ENCODE measurements at regions of chr21 and their contacts with region 1.

Region 1: DNA sequence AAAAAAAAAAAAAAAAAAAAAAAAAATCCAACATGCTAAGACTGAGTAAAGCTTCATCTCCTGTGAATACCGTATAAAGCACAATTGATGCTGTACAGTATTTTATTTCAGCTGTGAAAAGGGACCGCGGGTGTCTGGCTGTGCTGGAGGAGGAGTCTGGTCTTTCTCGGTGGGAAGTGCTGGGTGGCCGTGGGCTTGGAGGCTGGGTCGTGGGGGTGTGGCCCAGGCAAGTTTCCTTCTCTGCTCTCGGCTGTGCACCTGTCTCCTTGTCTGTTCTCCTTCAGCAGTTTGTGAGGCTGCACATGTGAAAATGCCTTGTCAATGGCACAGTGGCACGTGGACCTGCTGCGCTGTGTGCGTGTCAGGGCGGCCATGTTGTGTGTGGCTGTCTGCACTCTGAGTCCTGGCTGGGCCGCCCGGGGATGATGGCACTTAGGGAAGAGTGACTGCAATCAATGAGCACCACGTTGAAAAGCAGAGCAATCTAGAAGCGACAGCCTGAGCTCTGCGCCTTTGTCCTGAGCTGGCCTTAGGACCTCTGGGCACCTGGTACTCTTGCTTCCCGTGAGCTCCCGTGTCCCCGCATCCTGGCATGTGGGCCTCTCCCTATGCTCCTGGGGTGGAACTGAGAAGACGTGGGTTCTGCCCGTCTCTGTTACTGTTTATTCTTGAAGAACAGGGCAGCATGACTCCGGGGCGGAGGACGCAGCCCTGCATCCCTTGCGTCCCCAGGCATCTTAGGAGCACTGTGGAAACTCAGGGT is 14.5 kb downstream of the AGPAT3 start:
- DNase-seq: no peak
- H3K4me3 ChIP-seq: no peak overlapping the region
- H3K27ac ChIP-seq: no peak overlapping the region
- H3K4me1 ChIP-seq: peaks cover 12% of the 10 kb centered on the region
- H3K27me3 ChIP-seq: no peaks in the 10 kb centered on the region
- CTCF ChIP-seq: no peak

Region 2: DNA sequence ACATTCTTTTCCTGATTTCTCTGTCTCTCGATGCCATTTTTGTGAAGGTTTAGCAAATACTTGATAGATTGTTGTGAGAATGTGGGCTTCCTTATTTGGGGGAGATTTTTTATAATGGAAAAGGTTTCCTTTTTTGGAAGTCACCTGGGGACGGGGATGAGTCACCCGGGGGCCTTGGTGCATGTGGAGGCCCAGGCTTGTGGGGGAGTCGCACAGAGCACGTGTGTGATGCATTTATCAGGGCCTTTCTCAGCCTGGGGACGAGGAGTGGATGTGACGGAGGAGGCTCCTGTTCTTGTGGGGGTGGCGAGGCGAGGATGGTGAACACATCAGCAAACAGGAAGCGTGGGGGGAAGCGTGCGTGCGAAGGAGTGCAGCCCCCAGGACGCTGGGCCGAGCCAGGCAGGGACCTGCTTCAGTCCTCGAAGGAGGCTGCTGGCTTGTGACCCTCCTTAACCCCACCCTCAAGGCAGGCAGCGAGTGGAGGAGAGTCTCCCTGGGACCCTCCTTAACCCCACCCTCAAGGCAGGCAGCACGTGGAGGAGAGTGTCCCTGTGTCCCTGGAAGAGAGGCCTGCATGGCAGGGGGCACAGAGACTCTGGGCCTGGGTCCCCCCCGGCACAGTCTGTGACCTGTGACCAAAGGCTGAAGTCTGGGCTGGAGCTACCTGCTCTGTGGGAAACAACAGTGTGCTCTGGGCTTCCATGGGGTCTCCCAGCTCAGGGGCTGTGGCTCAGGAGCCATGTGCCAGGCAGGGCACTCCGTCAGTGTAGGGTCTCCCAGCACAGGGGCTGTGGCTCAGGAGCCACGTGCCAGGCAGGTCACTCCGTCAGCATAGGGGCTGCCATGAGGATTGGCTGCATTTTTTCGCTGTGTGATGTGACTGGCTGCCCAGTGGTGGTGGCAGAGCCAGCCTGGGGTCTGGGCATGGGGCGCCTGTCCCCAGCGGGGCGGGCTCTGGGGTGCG is 42.7 kb after region 1 on chr21:
- intact Hi-C with region 1: loop called (anchors 5 kb)
- DNase-seq: no peak
- H3K4me3 ChIP-seq: no peak overlapping the region
- H3K27ac ChIP-seq: no peak overlapping the region
- H3K4me1 ChIP-seq: peaks cover 8% of the 10 kb centered on the region
- H3K27me3 ChIP-seq: no peaks in the 10 kb centered on the region
- CTCF ChIP-seq: no peak

Region 3: GRCh38 chr21:43938751-43939442 is 59.4 kb after region 1 on chr21:
- intact Hi-C with region 1: no loop called
- DNase-seq: peak; percentile 86
- H3K4me3 ChIP-seq: peak overlapping the region; percentile 34
- H3K27ac ChIP-seq: no peak overlapping the region
- H3K4me1 ChIP-seq: no peaks in the 10 kb centered on the region
- H3K27me3 ChIP-seq: no peaks in the 10 kb centered on the region
- CTCF ChIP-seq: peak; percentile 98